Ovary (tissue), 10 donors: ENCODE measurements at regions of chr20 and their contacts with region 1.

Region 1: DNA sequence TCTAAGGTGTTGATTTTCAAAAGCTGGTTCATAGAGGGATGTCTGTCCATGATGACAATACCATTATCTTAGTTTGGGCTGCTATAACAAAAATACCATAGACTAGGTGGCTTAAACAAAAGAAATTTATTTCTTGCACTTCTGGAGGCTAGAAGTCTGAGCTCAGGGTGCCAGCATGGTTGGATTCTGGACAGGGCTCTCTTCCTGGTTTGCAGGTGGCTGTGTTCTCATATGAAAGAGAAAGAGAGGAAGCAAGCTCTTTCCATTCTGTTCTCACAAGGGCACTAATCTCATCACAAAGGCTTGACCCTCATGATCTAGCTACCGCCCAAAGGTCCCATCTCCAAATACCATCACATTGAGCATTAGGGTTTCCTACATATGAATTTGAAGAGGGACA is 144.5 kb upstream of the SLC24A3 start:
- DNase-seq: no peak
- H3K4me3 ChIP-seq: no peak overlapping the region
- H3K27ac ChIP-seq: no peak overlapping the region
- H3K4me1 ChIP-seq: no peaks in the 10 kb centered on the region
- H3K27me3 ChIP-seq: no peaks in the 10 kb centered on the region
- CTCF ChIP-seq: no peak
- EP300 ChIP-seq: no peak
- POLR2A ChIP-seq: no peak

Region 2: DNA sequence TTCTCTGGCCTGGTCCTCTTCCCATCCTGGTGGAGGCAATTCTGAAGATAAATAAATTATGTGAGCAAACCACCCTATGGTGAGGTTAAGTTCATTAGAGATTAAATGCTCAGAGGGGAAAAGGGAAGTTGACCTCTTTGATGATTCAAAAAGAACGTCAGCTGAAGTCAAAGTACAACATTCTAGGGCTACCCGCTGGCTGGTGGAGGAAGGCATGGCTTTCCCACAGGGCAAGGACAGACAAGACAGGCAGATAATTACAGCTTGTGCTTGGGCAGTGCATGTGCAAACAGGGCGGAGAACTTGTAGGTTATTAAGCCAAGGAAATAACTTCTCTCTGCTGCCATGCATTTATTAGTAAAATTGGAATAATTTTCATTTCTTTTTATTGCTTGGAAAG is 53.5 kb after region 1 on chr20:
- intact Hi-C with region 1: loop called in 1 of 4 experiments (anchors 10 kb)
- DNase-seq: no peak
- H3K4me3 ChIP-seq: no peak overlapping the region
- H3K27ac ChIP-seq: no peak overlapping the region
- H3K4me1 ChIP-seq: no peaks in the 10 kb centered on the region
- H3K27me3 ChIP-seq: no peaks in the 10 kb centered on the region
- CTCF ChIP-seq: no peak
- EP300 ChIP-seq: no peak
- POLR2A ChIP-seq: no peak